MCF 10A (cell line): ENCODE measurements at regions of chr10 and their contacts with region 1.

Region 1: DNA sequence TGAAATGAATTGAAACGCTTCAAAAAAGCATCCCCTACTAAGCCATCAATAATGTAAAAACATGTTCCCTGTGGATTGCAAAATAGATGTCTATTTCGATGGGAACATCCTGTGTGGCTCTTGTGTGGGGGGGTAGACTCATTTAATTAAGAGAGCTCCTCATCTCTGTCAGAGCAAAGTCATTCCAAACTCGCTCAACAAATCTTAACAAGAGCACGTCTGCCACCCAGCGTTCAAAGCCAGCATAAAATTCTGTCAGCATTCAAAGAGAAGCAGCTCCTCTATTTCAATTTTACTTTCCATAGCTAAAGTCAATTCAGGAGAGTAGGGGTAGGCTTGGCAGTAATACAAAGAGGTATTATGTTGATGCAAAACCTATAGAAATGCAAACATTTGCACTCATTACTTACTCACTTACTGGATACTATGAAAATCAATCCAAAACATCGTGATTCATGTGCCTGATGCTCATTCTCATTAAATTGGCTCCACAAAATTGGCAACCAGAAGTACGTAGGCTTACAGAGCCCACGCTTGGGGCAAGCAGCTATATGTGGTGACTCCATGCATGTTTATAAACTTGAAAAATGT is 114.9 kb downstream of the IPMK start:
- DNase-seq: peak; percentile 80
- H3K4me3 Mint-ChIP-seq: no peak overlapping the region
- H3K27ac Mint-ChIP-seq: no peak overlapping the region
- H3K4me1 Mint-ChIP-seq: peaks cover 16% of the 10 kb centered on the region
- H3K27me3 Mint-ChIP-seq: no peaks in the 10 kb centered on the region
- CTCF ChIP-seq: peak; percentile 52

Region 2: GRCh38 chr10:57338823-57339558 is 813.8 kb before region 1 on chr10:
- CTCF ChIA-PET with region 1: interaction called, 7 read pairs
- POLR2A ChIA-PET with region 1: interaction called, 3 read pairs
- intact Hi-C with region 1: loop called (anchors 1 kb)
- DNase-seq: peak; percentile 56
- H3K4me3 Mint-ChIP-seq: no peak overlapping the region
- H3K27ac Mint-ChIP-seq: no peak overlapping the region
- H3K4me1 Mint-ChIP-seq: no peaks in the 10 kb centered on the region
- H3K27me3 Mint-ChIP-seq: peaks cover 6% of the 10 kb centered on the region
- CTCF ChIP-seq: peak; percentile 55

Region 3: DNA sequence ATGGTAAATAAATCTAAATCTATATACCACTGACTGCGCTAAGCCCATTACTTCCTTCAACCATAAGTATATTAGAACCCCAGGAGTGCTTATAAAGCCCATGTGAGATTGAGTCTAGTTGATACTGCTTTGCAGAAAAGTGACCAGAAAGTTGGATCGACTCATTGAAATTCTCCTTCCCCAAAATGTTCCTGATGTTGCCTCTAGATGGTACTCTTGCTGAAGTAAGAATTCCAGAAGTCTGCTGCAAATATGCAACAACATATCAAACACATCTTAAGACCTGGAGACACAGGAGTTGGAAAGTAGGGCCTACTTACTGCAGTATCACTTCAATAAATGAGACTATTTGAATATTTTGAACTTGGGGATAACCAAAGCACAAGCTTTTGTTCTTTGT is 435.9 kb before region 1 on chr10:
- CTCF ChIA-PET with region 1: interaction called, 19 read pairs
- POLR2A ChIA-PET with region 1: interaction called, 4 read pairs
- intact Hi-C with region 1: loop called (anchors 1 kb)
- DNase-seq: peak; percentile 53
- H3K4me3 Mint-ChIP-seq: no peak overlapping the region
- H3K27ac Mint-ChIP-seq: no peak overlapping the region
- H3K4me1 Mint-ChIP-seq: no peaks in the 10 kb centered on the region
- H3K27me3 Mint-ChIP-seq: no peaks in the 10 kb centered on the region
- CTCF ChIP-seq: peak; percentile 42

Region 4: DNA sequence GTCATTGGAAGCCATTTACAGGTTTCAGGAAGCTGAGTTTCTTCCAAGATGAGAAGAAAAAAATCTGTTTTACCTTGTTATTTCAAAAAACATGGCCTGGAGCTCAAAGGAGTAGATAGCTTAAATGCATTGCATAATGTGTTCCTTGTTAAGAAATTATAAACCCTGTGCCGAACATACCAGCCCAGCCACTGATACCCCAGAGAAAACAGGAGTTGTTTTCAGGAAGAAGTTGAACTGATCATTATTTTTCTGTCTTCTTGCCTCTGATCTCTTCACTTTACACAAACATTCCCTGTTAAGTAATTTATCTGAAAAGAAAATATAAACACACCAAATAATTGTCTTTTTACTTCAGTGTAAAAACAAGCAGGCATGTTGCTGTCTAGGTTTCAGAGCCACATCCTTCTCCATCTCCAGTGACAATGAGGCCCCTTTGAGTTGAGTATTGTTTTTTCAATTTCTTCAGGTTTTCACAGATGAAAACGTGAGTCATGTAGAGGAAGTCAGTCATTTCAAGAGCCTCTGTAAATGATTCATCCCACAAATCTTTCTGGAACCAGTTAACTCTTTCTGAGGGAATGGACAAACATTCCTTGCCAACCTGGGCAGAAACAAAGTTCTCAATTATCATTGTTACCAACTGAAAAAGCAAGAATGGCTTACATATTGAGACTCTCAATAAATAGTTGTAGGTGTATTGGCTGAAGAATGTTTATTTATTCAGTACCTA is 129.3 kb before region 1 on chr10:
- CTCF ChIA-PET with region 1: no interaction called
- POLR2A ChIA-PET with region 1: no interaction called
- intact Hi-C with region 1: loop called (anchors 10 kb)
- DNase-seq: peak; percentile 80
- H3K4me3 Mint-ChIP-seq: peak overlapping the region; percentile 65
- H3K27ac Mint-ChIP-seq: peak overlapping the region; percentile 97
- H3K4me1 Mint-ChIP-seq: peaks cover 29% of the 10 kb centered on the region
- H3K27me3 Mint-ChIP-seq: no peaks in the 10 kb centered on the region
- CTCF ChIP-seq: no peak

Region 5: GRCh38 chr10:58064714-58065528 is 87.8 kb before region 1 on chr10:
- CTCF ChIA-PET with region 1: interaction called, 20 read pairs
- POLR2A ChIA-PET with region 1: no interaction called
- intact Hi-C with region 1: loop called (anchors 2 kb)
- DNase-seq: peak; percentile 62
- H3K4me3 Mint-ChIP-seq: no peak overlapping the region
- H3K27ac Mint-ChIP-seq: peak overlapping the region; percentile 30
- H3K4me1 Mint-ChIP-seq: peaks cover 6% of the 10 kb centered on the region
- H3K27me3 Mint-ChIP-seq: no peaks in the 10 kb centered on the region
- CTCF ChIP-seq: peak; percentile 90

Region 6: DNA sequence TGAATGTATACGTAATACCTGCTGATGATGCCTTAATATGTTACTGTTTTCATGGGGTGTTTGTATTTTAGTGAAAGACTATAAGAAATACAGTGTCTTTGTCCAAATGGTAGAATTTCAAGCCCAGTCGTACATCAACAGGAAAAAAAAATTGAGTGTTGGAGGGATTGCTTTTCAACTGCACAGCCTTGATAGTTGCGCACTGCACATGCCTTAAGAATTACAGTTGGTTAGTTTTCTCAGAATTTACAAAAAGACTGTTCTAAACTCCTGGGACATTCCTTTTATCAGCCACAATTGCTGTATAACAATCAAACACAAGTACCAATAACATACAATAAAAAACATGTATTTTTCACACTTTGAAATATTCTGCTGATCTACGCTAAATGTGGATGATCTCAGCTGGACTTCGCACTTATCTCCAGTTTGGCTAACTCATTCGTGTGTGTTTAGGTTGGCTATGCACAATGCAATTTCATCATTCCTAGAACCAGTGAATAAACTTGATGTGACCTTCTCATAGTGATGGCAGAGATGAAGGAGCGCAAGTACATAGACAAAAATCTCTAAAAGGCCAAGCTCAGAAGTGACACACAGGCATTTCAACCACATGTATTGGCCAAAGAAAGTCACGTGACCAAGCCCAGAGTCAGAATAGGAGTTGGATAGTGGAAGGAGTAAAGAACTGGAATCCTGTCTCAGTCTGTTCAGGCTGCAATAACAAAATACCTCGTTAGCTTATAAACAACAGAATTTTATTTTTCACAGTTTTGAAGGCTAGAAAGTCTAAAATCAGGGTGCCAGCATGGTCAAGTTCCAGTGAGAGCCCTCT is 37.3 kb before region 1 on chr10:
- CTCF ChIA-PET with region 1: no interaction called
- POLR2A ChIA-PET with region 1: no interaction called
- intact Hi-C with region 1: no loop called
- DNase-seq: no peak
- H3K4me3 Mint-ChIP-seq: no peak overlapping the region
- H3K27ac Mint-ChIP-seq: no peak overlapping the region
- H3K4me1 Mint-ChIP-seq: no peaks in the 10 kb centered on the region
- H3K27me3 Mint-ChIP-seq: no peaks in the 10 kb centered on the region
- CTCF ChIP-seq: no peak